Left cardiac atrium (tissue), 4 donors: ENCODE measurements at regions of chr19 and their contacts with region 1.

Region 1: DNA sequence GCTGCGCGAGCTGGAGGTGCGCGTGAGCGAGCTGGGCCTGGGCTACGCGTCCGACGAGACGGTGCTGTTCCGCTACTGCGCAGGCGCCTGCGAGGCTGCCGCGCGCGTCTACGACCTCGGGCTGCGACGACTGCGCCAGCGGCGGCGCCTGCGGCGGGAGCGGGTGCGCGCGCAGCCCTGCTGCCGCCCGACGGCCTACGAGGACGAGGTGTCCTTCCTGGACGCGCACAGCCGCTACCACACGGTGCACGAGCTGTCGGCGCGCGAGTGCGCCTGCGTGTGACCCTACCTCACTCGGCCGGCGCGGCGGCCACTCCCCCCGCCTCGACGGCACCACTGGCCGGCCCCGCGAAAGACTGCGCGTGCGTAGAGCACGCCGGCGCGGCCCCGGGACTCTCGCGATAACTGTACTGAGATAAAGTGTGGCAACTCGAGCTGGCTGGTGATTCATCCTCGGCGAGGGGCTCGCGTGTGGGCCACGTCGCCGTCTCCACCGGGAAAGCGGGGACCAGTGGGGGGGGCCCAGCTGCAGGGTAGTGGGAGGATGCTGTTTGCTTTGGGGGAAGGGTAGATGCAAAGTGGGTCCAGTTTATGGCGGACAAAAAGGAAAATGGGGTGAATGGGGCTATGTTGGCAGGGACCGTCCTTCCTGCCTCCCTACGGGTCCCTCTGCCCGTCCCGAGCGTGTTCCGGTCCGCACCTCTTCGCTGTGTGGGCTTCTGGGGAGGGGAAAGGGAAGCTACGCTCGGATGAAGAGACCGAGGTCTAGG is 11.4 kb downstream of the FUT6 start:
- DNase-seq: peak; percentile 91
- ATAC-seq: peak; percentile 85 to 89

Region 2: GRCh38 chr19:5891938-5892771 is 64.1 kb after region 1 on chr19:
- intact Hi-C with region 1: loop called in 1 of 2 experiments (anchors 5 kb)
- DNase-seq: peak; percentile 64
- ATAC-seq: peak; percentile 43 to 54